Ascending aorta (tissue), 2 donors: ENCODE measurements at regions of chr18 and their contacts with region 1.

Region 1: GRCh38 chr18:58975296-58975695 is 110.6 kb downstream of the ZNF532 start:
- DNase-seq: no peak
- H3K4me3 ChIP-seq: peak overlapping the region in 1 of 2 donors; percentile 28
- H3K27ac ChIP-seq: peak overlapping the region; percentile 78 to 80
- H3K4me1 ChIP-seq: peaks cover 8 to 35% of the 10 kb centered on the region in 2 donors
- H3K27me3 ChIP-seq: no peaks in the 10 kb centered on the region
- CTCF ChIP-seq: no peak

Region 2: GRCh38 chr18:58858616-58859468 is 116.5 kb before region 1 on chr18:
- intact Hi-C with region 1: loop called (anchors 5 kb)
- DNase-seq: peak in 1 of 2 donors; percentile 79
- H3K4me3 ChIP-seq: no peak overlapping the region
- H3K27ac ChIP-seq: peak overlapping the region; percentile 86 to 100
- H3K4me1 ChIP-seq: peaks cover 7 to 39% of the 10 kb centered on the region in 2 donors
- H3K27me3 ChIP-seq: no peaks in the 10 kb centered on the region
- CTCF ChIP-seq: no peak

Region 3: GRCh38 chr18:58928386-58928785 is 46.9 kb before region 1 on chr18:
- intact Hi-C with region 1: loop called (anchors 5 kb)
- DNase-seq: no peak
- H3K4me3 ChIP-seq: peak overlapping the region; percentile 5 to 54
- H3K27ac ChIP-seq: peak overlapping the region; percentile 70 to 72
- H3K4me1 ChIP-seq: peaks cover 0 to 29% of the 10 kb centered on the region in 2 donors
- H3K27me3 ChIP-seq: no peaks in the 10 kb centered on the region
- CTCF ChIP-seq: no peak

Region 4: DNA sequence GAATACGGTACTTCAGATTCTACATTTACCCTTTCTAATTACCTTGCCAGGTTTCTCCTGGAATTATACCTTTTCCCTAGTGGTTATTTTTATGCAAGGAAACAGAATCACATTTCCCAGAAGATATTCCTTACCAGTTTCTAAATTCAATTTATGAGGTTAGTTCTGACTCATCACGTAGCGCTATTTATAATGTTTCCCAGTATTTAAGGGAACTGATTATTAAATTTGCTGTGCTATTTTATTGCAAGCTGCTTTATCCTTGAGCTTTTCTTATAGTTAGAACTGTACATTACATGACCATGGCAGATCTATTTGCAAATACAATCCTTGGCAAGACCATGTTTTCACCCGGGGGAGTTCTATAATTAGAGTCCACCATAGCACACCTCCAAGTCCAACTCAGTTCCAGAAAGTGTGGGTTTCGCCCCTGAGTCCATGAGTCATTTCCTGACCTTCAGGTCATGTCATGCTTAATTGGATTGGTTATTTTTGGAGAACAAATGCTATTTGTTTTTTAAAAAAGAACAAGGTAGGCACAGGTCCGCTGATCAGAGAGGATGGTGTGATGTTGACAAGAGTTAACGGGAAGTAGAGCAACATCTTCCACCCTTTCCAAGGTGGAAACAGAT is 16.0 kb after region 1 on chr18:
- intact Hi-C with region 1: no loop called
- DNase-seq: peak in 1 of 2 donors; percentile 68
- H3K4me3 ChIP-seq: no peak overlapping the region
- H3K27ac ChIP-seq: peak overlapping the region; percentile 93 to 95
- H3K4me1 ChIP-seq: peaks cover 19 to 57% of the 10 kb centered on the region in 2 donors
- H3K27me3 ChIP-seq: no peaks in the 10 kb centered on the region
- CTCF ChIP-seq: peak in 1 of 3 experiments; percentile 28